Activated CD4-positive, alpha-beta T cell treated with anti-CD3 and anti-CD28 coated beads for 36 hours (primary cell): ENCODE measurements at regions of chr11 and their contacts with region 1.

Region 1: GRCh38 chr11:62427630-62428233 is 8.9 kb downstream of the SCGB1A1 start:
- DNase-seq: peak; percentile 36
- ATAC-seq: peak; percentile 63
- H3K4me3 Mint-ChIP-seq: peak overlapping the region; percentile 5
- H3K27ac Mint-ChIP-seq: peak overlapping the region; percentile 70
- H3K4me1 Mint-ChIP-seq: peaks cover 29% of the 10 kb centered on the region
- H3K27me3 Mint-ChIP-seq: no peaks in the 10 kb centered on the region

Region 2: GRCh38 chr11:62394825-62395538 is 32.8 kb before region 1 on chr11:
- CTCF ChIA-PET with region 1: interaction called, 25 read pairs
- POLR2A ChIA-PET with region 1: no interaction called
- intact Hi-C with region 1: no loop called
- DNase-seq: peak; percentile 55
- ATAC-seq: peak; percentile 91
- H3K4me3 Mint-ChIP-seq: no peak overlapping the region
- H3K27ac Mint-ChIP-seq: no peak overlapping the region
- H3K4me1 Mint-ChIP-seq: peaks cover 12% of the 10 kb centered on the region
- H3K27me3 Mint-ChIP-seq: no peaks in the 10 kb centered on the region

Region 3: DNA sequence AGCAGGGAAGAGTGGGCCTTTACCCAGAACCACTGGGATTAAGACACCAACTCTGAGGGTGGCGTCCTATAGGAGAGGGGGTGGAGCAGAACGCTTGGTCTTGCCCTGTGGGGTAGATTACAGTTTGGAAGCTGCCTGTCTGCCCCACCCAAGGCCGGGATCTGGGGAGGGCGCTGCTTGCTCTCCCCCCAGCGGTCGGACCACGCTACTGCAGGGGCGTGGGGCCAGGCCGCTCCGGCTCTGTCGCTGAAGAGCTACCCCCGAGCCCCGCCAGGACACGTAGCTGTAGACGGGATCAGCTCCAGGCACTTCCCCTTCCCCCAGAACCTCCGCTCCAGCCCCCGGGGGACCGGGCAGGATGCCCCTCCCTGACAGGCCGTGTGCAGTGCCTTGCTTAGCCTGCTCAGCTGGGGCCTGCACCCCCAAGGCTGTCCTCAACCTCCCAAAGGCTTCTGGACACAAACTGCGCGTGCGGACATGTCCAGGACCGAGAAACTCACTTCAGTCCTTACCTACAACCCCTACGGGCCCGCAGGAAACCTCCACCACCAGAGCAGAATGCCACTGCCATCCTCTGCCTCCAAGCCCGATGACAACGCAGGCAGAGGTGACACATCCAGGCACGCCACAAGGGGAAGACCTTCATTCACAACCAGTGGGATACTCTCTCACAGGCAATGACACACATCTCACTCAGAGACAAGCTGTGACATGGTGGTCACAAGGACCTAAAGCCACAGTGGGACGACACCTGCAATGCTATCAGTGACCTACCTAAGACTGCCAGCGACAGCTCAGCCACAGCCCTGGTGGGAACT is 115.2 kb after region 1 on chr11:
- CTCF ChIA-PET with region 1: interaction called, 60 read pairs
- POLR2A ChIA-PET with region 1: interaction called, 6 read pairs
- intact Hi-C with region 1: loop called (anchors 1 to 5 kb)
- DNase-seq: peak; percentile 84
- ATAC-seq: peak; percentile 67
- H3K4me3 Mint-ChIP-seq: peak overlapping the region; percentile 83
- H3K27ac Mint-ChIP-seq: peak overlapping the region; percentile 58
- H3K4me1 Mint-ChIP-seq: peaks cover 80% of the 10 kb centered on the region
- H3K27me3 Mint-ChIP-seq: peaks cover 3% of the 10 kb centered on the region

Region 4: GRCh38 chr11:62565100-62565802 is 137.5 kb after region 1 on chr11:
- CTCF ChIA-PET with region 1: interaction called, 56 read pairs
- POLR2A ChIA-PET with region 1: interaction called, 14 read pairs
- intact Hi-C with region 1: loop called in 1 of 2 experiments (anchors 1 kb)
- DNase-seq: no peak
- ATAC-seq: no peak
- H3K4me3 Mint-ChIP-seq: no peak overlapping the region
- H3K27ac Mint-ChIP-seq: peak overlapping the region; percentile 45
- H3K4me1 Mint-ChIP-seq: peaks cover 60% of the 10 kb centered on the region
- H3K27me3 Mint-ChIP-seq: no peaks in the 10 kb centered on the region